ENCODE measurements at regions of chr9 and their contacts with region 1.

Region 1: DNA sequence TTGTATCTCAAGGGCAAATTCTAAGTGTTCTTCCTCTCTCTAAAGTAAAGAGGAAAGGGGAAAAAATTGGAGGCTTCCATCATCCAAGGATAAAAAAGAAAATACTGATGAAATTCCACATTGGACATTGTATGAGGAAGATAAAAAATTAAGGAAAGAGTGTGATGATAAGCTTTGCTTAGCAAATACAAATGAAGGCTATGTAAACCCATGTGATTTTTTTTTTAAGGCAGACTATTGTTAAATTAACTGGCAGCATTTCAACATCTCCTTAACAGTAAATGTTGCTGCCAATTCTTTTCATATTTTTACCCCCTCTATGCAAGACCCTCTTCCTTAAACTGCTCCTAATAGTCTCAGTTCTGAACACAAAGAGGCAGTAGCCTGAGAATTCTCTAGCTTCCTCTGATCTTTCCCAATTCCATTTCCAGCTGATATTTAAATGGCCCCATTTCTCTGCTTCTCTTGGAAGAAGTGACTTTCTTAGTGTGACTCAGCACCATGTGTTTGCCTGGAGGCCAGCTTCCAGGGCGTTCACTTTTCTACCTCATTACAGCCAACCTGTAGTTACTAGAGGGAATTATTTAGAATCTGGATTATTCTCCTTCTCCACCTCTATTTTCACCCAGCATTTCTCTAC is 159.7 kb downstream of the TLE1 start:
- DNase-seq: peak in 6 of 7 donors; percentile 23 to 59 (median 40)
- H3K4me3 ChIP-seq: no peak overlapping the region
- H3K27ac ChIP-seq: no peak overlapping the region
- H3K4me1 ChIP-seq: peaks cover 6 to 11% of the 10 kb centered on the region in 2 donors
- H3K27me3 ChIP-seq: no peaks in the 10 kb centered on the region
- CTCF ChIP-seq: no peak
- POLR2A ChIP-seq: no peak

Region 2: DNA sequence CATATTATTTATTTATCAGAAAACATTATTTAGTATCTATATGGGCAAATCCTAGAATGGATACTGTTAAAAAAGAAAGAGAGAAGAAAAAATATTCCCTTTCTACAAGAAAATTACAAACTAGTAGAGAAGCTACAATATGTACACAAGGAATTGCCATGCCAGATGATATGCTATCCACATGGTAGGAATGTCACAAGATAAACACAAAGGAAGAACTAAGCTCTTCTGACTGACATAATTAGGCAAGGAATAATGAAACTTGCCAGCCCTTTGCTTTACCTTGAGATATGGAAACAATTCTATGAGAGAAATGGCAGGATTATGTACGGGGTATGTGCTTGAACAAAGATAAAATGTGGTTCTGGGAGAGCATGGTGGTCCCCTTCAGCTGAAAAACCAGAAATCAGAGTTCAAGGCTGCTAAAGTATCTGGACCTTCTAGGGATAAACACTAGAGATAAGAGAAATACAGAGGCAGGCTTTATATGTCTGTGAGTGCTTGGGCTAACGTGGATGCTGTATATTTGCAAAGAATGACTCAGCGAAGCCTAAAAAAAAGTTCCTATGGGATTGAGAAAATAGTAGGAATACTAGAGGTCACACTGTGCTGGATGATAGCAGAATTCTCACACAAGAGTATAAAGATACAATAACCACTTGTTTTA is 292.0 kb before region 1 on chr9:
- intact Hi-C with region 1: no loop called
- DNase-seq: no peak
- H3K4me3 ChIP-seq: no peak overlapping the region
- H3K27ac ChIP-seq: no peak overlapping the region
- H3K4me1 ChIP-seq: no peaks in the 10 kb centered on the region
- H3K27me3 ChIP-seq: no peaks in the 10 kb centered on the region
- CTCF ChIP-seq: no peak
- POLR2A ChIP-seq: no peak

Region 3: DNA sequence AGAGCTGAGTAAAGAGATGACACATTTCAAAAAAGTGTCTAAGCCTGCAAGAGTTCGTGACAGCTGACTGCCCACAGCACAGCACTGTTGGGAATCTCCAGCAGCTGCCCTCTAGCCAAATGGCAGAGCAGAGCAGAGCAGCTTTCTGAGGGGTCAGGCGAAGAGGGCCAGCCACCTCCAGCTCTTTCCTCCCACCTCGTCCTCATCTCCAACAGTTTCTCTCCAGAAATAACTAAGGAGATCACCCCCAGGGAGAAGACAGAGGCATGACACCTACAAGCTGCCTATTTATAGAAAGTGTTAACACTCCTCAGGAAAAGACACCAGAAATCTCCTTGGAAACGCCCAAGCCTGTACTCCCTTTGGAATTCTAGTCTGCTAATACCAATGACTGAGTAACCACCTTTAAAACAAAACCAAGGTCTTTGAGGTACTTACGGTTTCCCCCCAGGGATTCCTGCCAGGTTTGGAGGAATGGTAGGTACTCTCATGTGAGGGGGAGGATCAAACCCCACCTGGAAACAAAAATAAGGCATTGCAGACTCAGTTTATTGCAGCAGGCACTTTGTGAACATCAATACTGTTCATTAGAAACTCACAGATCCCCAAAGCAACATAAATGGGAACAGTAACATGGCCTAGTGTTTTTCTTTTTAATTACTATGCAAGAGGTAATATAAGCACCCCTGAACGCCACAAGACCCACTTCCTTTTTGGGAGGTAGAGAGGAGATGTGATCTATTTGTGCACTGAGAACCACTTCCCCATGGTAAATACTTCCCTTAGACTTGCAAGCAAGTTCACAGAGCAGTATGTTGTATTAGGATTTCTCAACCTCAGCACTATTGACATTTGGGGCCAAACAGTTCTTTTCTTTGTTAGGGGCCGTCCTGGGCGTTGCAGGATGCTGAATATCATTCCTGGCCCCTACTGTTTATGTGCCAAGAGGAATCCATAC is 80.4 kb after region 1 on chr9:
- intact Hi-C with region 1: loop called in 1 of 2 experiments (anchors 10 kb)
- DNase-seq: no peak
- H3K4me3 ChIP-seq: no peak overlapping the region
- H3K27ac ChIP-seq: peak overlapping the region in 1 of 5 donors; percentile 67
- H3K4me1 ChIP-seq: peaks cover 0 to 7% of the 10 kb centered on the region in 2 donors
- H3K27me3 ChIP-seq: no peaks in the 10 kb centered on the region
- CTCF ChIP-seq: no peak
- POLR2A ChIP-seq: no peak

Region 4: DNA sequence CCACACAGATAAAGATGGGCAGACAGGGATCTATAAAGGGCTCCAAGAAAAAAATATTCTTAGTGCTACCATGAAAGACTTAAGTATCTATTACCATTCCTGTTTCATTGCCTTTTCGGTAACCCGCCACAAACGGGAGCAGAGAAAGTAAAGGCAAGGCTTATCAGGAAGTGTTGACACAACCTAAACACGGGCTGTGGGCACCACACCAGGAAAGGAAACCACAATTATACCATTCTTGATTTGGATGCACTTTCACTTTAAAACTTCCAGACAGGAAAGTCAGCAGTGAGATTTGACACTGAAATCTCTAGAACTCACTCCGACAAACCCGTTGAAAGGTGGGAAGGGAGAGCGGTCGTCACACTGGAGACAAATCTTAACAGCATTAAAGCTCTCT is 153.1 kb after region 1 on chr9:
- intact Hi-C with region 1: loop called (anchors 5 to 10 kb)
- DNase-seq: peak in 1 of 7 donors; percentile 16
- H3K4me3 ChIP-seq: no peak overlapping the region
- H3K27ac ChIP-seq: peak overlapping the region in 1 of 5 donors; percentile 28
- H3K4me1 ChIP-seq: peaks cover 24 to 60% of the 10 kb centered on the region in 2 donors
- H3K27me3 ChIP-seq: no peaks in the 10 kb centered on the region
- CTCF ChIP-seq: no peak
- POLR2A ChIP-seq: no peak